ENCODE measurements at regions of chr1 and their contacts with region 1.

Region 1: DNA sequence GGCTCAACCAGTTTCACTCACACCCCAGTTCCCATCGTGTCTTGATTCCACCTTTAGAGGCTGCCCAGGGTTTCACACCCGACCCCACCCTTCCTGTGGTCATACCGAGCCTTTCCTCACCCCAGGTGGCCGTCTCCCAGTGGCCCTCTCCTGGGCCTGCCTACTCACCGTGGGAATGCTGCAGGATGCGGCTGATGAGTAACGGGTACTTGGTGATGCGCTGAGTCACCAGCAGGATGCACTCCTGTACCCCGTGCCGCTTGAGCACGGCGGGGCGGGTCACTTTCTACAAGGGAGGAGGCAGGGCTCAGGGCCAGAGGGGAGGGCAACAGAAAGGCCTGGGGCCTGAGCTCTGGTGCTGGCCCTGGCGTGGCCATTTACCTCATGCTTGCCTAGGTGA is 16.4 kb downstream of the ARHGEF2 start:
- DNase-seq: peak; percentile 79 to 95
- H3K4me3 ChIP-seq: peak overlapping the region in 1 of 2 donors; percentile 9
- H3K27ac ChIP-seq: peak overlapping the region; percentile 89 to 92
- H3K4me1 ChIP-seq: peaks cover 9 to 36% of the 10 kb centered on the region in 2 donors
- H3K27me3 ChIP-seq: no peaks in the 10 kb centered on the region
- CTCF ChIP-seq: peak; percentile 14 to 34 (median 34)

Region 2: GRCh38 chr1:155983191-155984024 is 21.5 kb after region 1 on chr1:
- intact Hi-C with region 1: loop called (anchors 1 kb)
- DNase-seq: peak in 1 of 2 donors; percentile 83
- H3K4me3 ChIP-seq: peak overlapping the region in 1 of 2 donors; percentile 9
- H3K27ac ChIP-seq: peak overlapping the region; percentile 94 to 98
- H3K4me1 ChIP-seq: peaks cover 30 to 44% of the 10 kb centered on the region in 2 donors
- H3K27me3 ChIP-seq: no peaks in the 10 kb centered on the region
- CTCF ChIP-seq: peak in 1 of 3 experiments; percentile 27

Region 3: GRCh38 chr1:155989242-155990004 is 27.5 kb after region 1 on chr1:
- intact Hi-C with region 1: loop called (anchors 1 kb)
- DNase-seq: peak in 1 of 2 donors; percentile 91
- H3K4me3 ChIP-seq: peak overlapping the region; percentile 54 to 79
- H3K27ac ChIP-seq: peak overlapping the region; percentile 77 to 86
- H3K4me1 ChIP-seq: peaks cover 0 to 3% of the 10 kb centered on the region in 2 donors
- H3K27me3 ChIP-seq: no peaks in the 10 kb centered on the region
- CTCF ChIP-seq: peak; percentile 98 to 99 (median 98)

Measured in ascending aorta (tissue), 2 donors.